ENCODE measurements at regions of chr5 and their contacts with region 1.

Region 1: GRCh38 chr5:163695830-163696578 is 190.6 kb downstream of the MAT2B start:
- DNase-seq: peak; percentile 80
- ATAC-seq: peak; percentile 98
- H3K4me3 ChIP-seq: no peak overlapping the region
- H3K4me3 Mint-ChIP-seq: no peak overlapping the region
- H3K27ac ChIP-seq: no peak overlapping the region
- H3K27ac Mint-ChIP-seq: peak overlapping the region; percentile 17
- H3K4me1 ChIP-seq: peaks cover 6 to 7% of the 10 kb centered on the region in 2 donors
- H3K4me1 Mint-ChIP-seq: peaks cover 10% of the 10 kb centered on the region
- H3K27me3 ChIP-seq: no peaks in the 10 kb centered on the region
- H3K27me3 Mint-ChIP-seq: peaks cover 5% of the 10 kb centered on the region
- CTCF ChIP-seq: peak; percentile 88

Region 2: DNA sequence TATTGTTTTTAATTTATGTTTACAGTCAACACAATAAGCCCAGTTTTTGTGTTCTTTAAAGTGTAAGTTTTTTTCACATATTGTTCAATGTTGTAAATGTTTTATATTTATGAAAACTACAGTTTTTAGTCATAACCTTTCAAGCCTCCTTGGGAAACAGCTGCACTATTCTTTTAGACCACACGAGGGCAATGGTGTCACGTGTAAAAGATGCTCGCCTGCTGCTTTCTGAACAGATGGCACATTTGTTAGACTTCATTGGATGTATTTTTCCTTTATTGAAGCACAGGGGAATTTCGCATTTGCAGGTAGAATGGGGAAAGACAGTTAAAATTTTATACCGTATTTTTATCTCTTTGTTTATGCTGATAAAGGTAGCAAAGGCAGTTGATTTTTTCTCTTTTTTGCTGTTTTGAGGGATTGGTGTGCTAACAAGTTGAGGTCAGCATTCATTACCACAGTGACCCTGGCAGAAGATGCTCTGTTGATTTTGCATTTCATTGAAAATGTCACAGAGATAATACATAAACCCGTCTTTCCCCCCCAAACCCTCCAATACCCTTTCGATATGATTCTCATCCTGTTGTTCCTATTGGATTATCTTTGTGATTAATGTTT is 131.6 kb before region 1 on chr5:
- CTCF ChIA-PET with region 1: interaction called, 23 read pairs
- POLR2A ChIA-PET with region 1: no interaction called
- intact Hi-C with region 1: loop called (anchors 1 kb)
- DNase-seq: peak; percentile 72
- ATAC-seq: peak; percentile 71
- H3K4me3 ChIP-seq: no peak overlapping the region
- H3K4me3 Mint-ChIP-seq: no peak overlapping the region
- H3K27ac ChIP-seq: no peak overlapping the region
- H3K27ac Mint-ChIP-seq: no peak overlapping the region
- H3K4me1 ChIP-seq: peaks cover 17 to 21% of the 10 kb centered on the region in 2 donors
- H3K4me1 Mint-ChIP-seq: peaks cover 21% of the 10 kb centered on the region
- H3K27me3 ChIP-seq: peaks cover 0 to 33% (median 26%) of the 10 kb centered on the region in 4 experiments
- H3K27me3 Mint-ChIP-seq: peaks cover 61% of the 10 kb centered on the region
- CTCF ChIP-seq: peak; percentile 97

Region 3: GRCh38 chr5:163735069-163735468 is 39.1 kb after region 1 on chr5:
- CTCF ChIA-PET with region 1: no interaction called
- POLR2A ChIA-PET with region 1: no interaction called
- intact Hi-C with region 1: no loop called
- DNase-seq: no peak
- ATAC-seq: no peak
- H3K4me3 ChIP-seq: no peak overlapping the region
- H3K4me3 Mint-ChIP-seq: no peak overlapping the region
- H3K27ac ChIP-seq: no peak overlapping the region
- H3K27ac Mint-ChIP-seq: no peak overlapping the region
- H3K4me1 ChIP-seq: no peaks in the 10 kb centered on the region
- H3K4me1 Mint-ChIP-seq: peaks cover 5% of the 10 kb centered on the region
- H3K27me3 ChIP-seq: no peaks in the 10 kb centered on the region
- H3K27me3 Mint-ChIP-seq: peaks cover 6% of the 10 kb centered on the region
- CTCF ChIP-seq: no peak

Region 4: DNA sequence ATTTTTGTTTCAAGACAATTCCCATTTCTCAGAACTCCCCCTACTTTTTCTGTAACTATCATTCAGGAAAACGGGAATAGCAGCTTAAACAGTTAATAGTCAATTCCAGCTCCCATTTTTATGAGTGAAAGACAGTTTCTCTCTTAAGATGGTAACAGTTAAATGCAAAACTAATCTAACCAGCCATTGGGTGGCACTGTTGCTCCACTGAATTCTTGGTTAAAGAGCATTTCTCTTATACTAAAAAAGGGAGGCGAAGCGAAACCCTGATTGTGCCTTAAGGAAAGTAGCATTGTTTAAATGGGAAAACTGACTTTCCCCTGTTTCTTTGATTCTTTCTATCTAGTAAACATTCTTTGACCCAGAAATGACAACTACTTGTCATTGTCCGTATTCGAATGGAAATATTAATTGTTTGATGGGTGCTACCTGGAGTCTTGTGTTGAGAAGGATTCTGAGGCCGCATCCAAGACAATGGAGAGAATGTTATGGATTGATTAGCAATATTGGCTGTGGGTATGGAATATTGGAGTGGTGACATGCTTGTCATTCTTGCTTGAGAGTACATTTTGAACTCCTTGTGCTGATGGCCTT is 317.2 kb after region 1 on chr5:
- CTCF ChIA-PET with region 1: interaction called, 46 read pairs
- POLR2A ChIA-PET with region 1: no interaction called
- intact Hi-C with region 1: loop called (anchors 1 kb)
- DNase-seq: peak; percentile 79
- ATAC-seq: peak; percentile 65
- H3K4me3 ChIP-seq: no peak overlapping the region
- H3K4me3 Mint-ChIP-seq: peak overlapping the region; percentile 48
- H3K27ac ChIP-seq: no peak overlapping the region
- H3K27ac Mint-ChIP-seq: peak overlapping the region; percentile 43
- H3K4me1 ChIP-seq: peaks cover 4 to 8% of the 10 kb centered on the region in 2 donors
- H3K4me1 Mint-ChIP-seq: peaks cover 11% of the 10 kb centered on the region
- H3K27me3 ChIP-seq: no peaks in the 10 kb centered on the region
- H3K27me3 Mint-ChIP-seq: no peaks in the 10 kb centered on the region
- CTCF ChIP-seq: peak; percentile 88

Region 5: GRCh38 chr5:164148292-164148691 is 452.3 kb after region 1 on chr5:
- CTCF ChIA-PET with region 1: no interaction called
- POLR2A ChIA-PET with region 1: no interaction called
- intact Hi-C with region 1: no loop called
- DNase-seq: no peak
- ATAC-seq: no peak
- H3K4me3 ChIP-seq: no peak overlapping the region
- H3K4me3 Mint-ChIP-seq: no peak overlapping the region
- H3K27ac ChIP-seq: no peak overlapping the region
- H3K27ac Mint-ChIP-seq: no peak overlapping the region
- H3K4me1 ChIP-seq: no peaks in the 10 kb centered on the region
- H3K4me1 Mint-ChIP-seq: no peaks in the 10 kb centered on the region
- H3K27me3 ChIP-seq: no peaks in the 10 kb centered on the region
- H3K27me3 Mint-ChIP-seq: no peaks in the 10 kb centered on the region
- CTCF ChIP-seq: no peak

Region 6: GRCh38 chr5:164498438-164498837 is 802.4 kb after region 1 on chr5:
- CTCF ChIA-PET with region 1: interaction called, 201 read pairs
- POLR2A ChIA-PET with region 1: no interaction called
- intact Hi-C with region 1: no loop called
- DNase-seq: no peak
- ATAC-seq: no peak
- H3K4me3 ChIP-seq: no peak overlapping the region
- H3K4me3 Mint-ChIP-seq: no peak overlapping the region
- H3K27ac ChIP-seq: no peak overlapping the region
- H3K27ac Mint-ChIP-seq: no peak overlapping the region
- H3K4me1 ChIP-seq: no peaks in the 10 kb centered on the region
- H3K4me1 Mint-ChIP-seq: no peaks in the 10 kb centered on the region
- H3K27me3 ChIP-seq: peaks cover 0 to 9% (median 0%) of the 10 kb centered on the region in 4 experiments
- H3K27me3 Mint-ChIP-seq: peaks cover 7% of the 10 kb centered on the region
- CTCF ChIP-seq: no peak

Region 7: DNA sequence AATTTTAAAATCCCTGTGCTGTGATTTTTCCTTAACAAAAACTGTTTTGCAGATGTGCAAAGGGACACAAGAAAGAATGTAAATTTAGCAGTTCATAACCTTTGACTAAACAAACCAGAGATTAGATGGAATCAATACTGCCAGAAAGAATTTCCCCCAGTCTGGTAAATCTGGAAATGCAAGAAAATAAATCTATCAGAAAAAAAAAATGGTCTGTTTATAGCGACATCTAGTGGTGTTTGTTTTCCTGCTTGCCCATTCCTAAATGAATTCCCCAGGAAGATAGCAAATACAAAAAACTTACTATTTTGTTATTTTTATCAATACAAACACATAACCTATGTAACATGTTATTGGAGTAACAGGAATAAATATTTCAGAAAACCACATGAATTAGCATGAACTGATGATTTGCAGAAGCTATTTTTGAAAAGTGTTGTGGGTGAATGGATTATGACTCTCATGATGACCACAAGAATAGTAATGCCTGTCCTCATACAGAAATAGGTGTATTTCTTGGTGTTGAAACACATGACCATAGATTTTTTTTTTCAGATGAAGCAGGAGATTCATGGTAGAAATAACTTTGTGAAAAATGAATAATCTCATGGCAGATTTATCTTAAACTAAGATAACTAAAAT is 1513.2 kb after region 1 on chr5:
- CTCF ChIA-PET with region 1: interaction called, 6 read pairs
- POLR2A ChIA-PET with region 1: no interaction called
- intact Hi-C with region 1: loop called (anchors 1 kb)
- DNase-seq: peak; percentile 23
- ATAC-seq: no peak
- H3K4me3 ChIP-seq: no peak overlapping the region
- H3K4me3 Mint-ChIP-seq: no peak overlapping the region
- H3K27ac ChIP-seq: no peak overlapping the region
- H3K27ac Mint-ChIP-seq: no peak overlapping the region
- H3K4me1 ChIP-seq: no peaks in the 10 kb centered on the region
- H3K4me1 Mint-ChIP-seq: no peaks in the 10 kb centered on the region
- H3K27me3 ChIP-seq: no peaks in the 10 kb centered on the region
- H3K27me3 Mint-ChIP-seq: no peaks in the 10 kb centered on the region
- CTCF ChIP-seq: peak; percentile 70